Aorta (tissue), 5 donors: ENCODE measurements at regions of chr1 and their contacts with region 1.

Region 1: DNA sequence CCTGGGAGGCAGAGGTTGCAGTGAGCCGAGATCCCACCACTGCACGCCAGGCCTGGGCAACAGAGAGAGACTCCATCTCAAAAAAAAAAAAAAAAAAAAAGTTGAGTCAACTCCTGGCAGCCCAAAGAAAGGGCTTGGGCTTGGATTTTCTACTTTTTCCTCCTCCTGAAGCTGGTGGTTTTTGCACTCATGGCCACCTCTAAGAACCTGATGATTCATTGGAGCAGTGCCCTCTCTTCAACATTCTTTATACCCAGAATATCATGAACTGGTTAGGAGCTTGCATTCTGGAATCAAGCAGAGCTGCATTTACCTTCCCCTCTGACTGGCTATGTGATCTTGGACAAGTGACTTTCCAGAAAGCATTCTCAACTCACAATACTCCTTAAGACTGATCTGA is 3.5 kb upstream of the ACTA1 start:
- DNase-seq: no peak
- ATAC-seq: no peak
- H3K4me3 ChIP-seq: no peak overlapping the region
- H3K27ac ChIP-seq: no peak overlapping the region
- H3K4me1 ChIP-seq: no peaks in the 10 kb centered on the region
- H3K27me3 ChIP-seq: no peaks in the 10 kb centered on the region

Region 2: DNA sequence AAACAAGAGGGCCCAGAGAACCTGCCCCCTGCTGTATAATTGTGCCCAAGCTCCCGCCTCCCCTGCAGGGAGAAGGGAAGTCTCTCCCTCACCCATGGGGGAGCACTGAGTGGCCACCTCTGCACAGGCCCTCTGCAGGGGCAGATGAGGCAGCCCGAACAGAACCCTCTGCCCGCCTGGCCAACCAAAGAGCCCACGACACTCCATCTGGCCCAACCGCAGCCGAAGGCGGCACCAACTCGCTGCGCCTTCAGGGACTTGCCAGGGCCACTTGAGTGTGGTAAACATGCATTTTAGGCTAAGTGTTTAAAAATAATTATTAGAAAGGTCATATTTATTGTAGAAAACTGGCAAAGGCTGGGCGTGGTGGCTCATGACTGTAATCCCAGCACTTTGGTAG is 60.0 kb before region 1 on chr1:
- intact Hi-C with region 1: loop called in 1 of 2 experiments (anchors 2 kb)
- DNase-seq: no peak
- ATAC-seq: no peak
- H3K4me3 ChIP-seq: no peak overlapping the region
- H3K27ac ChIP-seq: no peak overlapping the region
- H3K4me1 ChIP-seq: no peaks in the 10 kb centered on the region
- H3K27me3 ChIP-seq: no peaks in the 10 kb centered on the region

Region 3: DNA sequence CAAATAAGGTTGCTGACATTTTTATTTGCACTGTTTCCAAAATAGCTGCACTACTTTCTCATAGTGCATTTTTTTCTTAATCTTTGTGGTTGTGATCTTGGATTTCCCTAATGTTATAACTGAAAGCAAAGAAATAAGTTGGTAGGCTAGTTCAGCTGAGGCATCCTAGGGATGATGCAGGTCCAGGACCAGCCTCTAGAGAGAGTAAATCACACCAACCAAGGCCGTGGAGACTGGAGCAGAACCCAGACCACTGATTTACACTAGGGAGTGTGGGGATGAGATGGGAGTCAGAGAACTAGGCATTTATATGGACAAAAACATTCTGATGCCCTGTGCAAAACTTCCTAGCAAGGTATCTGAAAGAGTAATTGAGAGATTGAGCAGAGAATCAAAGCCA is 293.1 kb after region 1 on chr1:
- intact Hi-C with region 1: no loop called
- DNase-seq: no peak
- ATAC-seq: no peak
- H3K4me3 ChIP-seq: no peak overlapping the region
- H3K27ac ChIP-seq: no peak overlapping the region
- H3K4me1 ChIP-seq: no peaks in the 10 kb centered on the region
- H3K27me3 ChIP-seq: no peaks in the 10 kb centered on the region